A549 (cell line): ENCODE measurements at regions of chr17 and their contacts with region 1.

Region 1: DNA sequence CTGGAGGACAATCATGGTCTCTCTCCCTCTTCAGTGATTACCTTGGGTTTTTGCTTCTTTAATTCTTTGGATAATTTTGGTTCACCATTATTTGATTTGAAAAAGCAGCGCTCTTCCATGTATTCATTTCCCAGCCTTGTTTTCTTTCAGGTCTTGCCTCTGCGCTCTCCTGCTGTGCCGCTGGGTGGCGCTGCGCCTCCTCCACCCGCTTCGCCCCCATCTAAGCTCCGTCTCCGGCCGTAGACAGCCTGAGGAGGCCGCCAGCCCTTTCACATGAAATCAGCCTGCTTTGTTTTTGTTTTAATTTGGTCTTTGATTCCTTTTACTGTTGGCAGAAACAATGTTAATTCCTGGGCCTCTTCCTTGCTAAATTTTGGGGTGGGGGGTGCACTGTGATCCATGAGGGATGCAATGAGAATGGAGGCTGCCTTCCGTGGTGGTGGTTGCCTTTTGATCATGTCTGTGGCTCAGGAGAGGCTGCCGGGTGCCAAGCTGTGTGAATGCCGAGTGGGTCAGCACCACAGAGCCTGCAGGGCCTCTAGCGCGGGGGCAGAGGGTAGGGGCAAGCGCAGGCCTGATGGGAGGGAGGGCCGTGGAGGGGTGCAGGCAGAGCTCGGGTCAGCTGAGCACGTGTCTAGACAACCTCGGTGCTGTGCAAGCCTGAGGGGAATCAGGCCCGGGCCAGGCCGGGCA is 64.1 kb downstream of the PLD6 start:
- DNase-seq: peak; percentile 63 to 85
- ATAC-seq: peak in 1 of 2 experiments; percentile 67; a peak in 3 of 6 replicates
- H3K4me3 ChIP-seq: no peak overlapping the region
- H3K27ac ChIP-seq: peak overlapping the region in 1 of 2 experiments; percentile 63; a peak in 3 of 6 replicates
- H3K4me1 ChIP-seq: peaks cover 28% of the 10 kb centered on the region
- CTCF ChIP-seq: peak; percentile 83
- EP300 ChIP-seq: no peak
- POLR2A ChIP-seq: no peak
- RAD21 ChIP-seq: peak; percentile 67 to 78

Region 2: DNA sequence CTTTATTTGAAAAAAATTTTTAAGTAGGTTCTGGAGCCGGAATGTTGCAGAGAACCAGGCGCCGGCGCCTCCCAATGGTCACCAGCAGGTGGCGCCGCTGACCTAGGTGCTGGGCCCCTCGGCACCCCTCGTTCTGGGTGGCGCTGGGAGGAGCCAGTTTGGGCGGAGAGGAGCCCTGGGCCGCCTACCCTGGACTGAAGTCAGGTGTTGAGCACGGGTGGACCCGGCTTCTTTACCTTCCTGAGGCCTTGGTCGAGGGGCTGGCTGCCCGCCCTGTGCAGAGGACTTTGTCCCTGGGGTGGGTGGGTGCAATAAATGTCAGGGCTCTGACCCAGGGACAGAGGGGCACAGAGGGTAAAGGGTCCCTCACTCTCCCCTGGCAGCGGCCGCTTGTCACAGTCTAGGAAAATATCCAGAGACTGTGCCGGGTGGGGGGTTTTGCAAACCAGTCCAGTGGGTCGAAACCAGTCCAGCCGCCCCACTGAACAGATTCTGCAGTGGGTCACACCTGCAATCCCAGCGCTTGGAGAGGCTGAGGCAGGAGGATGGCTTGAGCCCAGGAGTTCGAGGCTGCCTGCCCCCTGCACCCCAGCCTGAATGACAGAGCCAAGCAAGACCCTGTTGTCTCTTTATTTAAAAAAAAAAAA is 140.0 kb before region 1 on chr17:
- CTCF ChIA-PET with region 1: interaction called, 30 read pairs
- POLR2A ChIA-PET with region 1: no interaction called
- DNase-seq: peak; percentile 81 to 88
- ATAC-seq: peak; percentile 84 to 93
- H3K4me3 ChIP-seq: no peak overlapping the region
- H3K27ac ChIP-seq: peak overlapping the region; percentile 77 to 83
- H3K4me1 ChIP-seq: peaks cover 11% of the 10 kb centered on the region
- CTCF ChIP-seq: peak; percentile 99
- EP300 ChIP-seq: no peak
- POLR2A ChIP-seq: no peak
- RAD21 ChIP-seq: peak; percentile 99 to 100

Region 3: DNA sequence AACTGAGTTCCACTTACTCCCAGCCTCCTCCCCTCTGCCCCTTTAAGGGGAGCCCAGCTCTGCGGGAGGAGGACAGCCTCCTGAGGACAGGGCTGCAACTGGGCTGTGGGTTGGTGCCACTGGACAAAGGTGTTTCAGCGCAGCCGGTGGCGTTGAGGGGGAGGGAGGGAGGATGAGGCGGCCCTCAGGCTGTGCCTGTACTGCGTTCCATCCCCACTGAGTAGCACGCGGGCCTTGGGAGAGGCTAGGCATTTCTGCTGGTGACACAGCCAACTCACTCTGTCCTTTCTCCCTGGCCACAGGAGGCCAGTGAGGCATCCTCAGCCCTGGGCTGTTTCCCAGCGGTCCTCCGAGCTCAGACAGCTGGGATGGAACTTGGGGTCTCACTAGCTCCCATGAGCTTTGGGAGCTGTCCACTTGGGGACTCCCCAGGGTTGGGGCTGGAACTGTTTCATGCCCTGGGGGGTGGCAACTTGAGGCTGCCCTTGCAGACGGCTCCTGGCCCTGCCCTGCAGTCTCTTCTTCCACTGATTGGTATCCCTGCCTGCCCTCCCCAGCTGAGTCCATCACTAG is 29.3 kb before region 1 on chr17:
- CTCF ChIA-PET with region 1: interaction called, 10 read pairs
- POLR2A ChIA-PET with region 1: no interaction called
- DNase-seq: no peak
- ATAC-seq: peak; percentile 8 to 22; a peak in 3 of 6 replicates
- H3K4me3 ChIP-seq: no peak overlapping the region
- H3K27ac ChIP-seq: peak overlapping the region in 1 of 2 experiments; percentile 27; a peak in 3 of 6 replicates
- H3K4me1 ChIP-seq: peaks cover 87% of the 10 kb centered on the region
- CTCF ChIP-seq: no peak
- EP300 ChIP-seq: no peak
- POLR2A ChIP-seq: no peak
- RAD21 ChIP-seq: no peak

Region 4: GRCh38 chr17:17125136-17126084 is 16.6 kb before region 1 on chr17:
- CTCF ChIA-PET with region 1: interaction called, 62 read pairs
- POLR2A ChIA-PET with region 1: no interaction called
- DNase-seq: no peak
- ATAC-seq: 0 out of 6 replicates have a peak, but pooled peaks of 1 of the 2 experiments have one; percentile 4
- H3K4me3 ChIP-seq: no peak overlapping the region
- H3K27ac ChIP-seq: peak overlapping the region in 1 of 2 experiments; percentile 16; a peak in 2 of 6 replicates
- H3K4me1 ChIP-seq: peaks cover 29% of the 10 kb centered on the region
- CTCF ChIP-seq: no peak
- EP300 ChIP-seq: no peak
- POLR2A ChIP-seq: no peak
- RAD21 ChIP-seq: no peak

Region 5: GRCh38 chr17:17175902-17176301 is 33.9 kb after region 1 on chr17:
- CTCF ChIA-PET with region 1: interaction called, 23 read pairs
- POLR2A ChIA-PET with region 1: no interaction called
- DNase-seq: no peak
- ATAC-seq: no peak
- H3K4me3 ChIP-seq: no peak overlapping the region
- H3K27ac ChIP-seq: no peak overlapping the region; a peak in 1 of 6 replicates
- H3K4me1 ChIP-seq: no peaks in the 10 kb centered on the region
- CTCF ChIP-seq: no peak
- EP300 ChIP-seq: no peak
- POLR2A ChIP-seq: no peak
- RAD21 ChIP-seq: no peak

Region 6: GRCh38 chr17:17196776-17197175 is 54.8 kb after region 1 on chr17:
- CTCF ChIA-PET with region 1: interaction called, 15 read pairs
- POLR2A ChIA-PET with region 1: no interaction called
- DNase-seq: no peak
- ATAC-seq: no peak
- H3K4me3 ChIP-seq: no peak overlapping the region
- H3K27ac ChIP-seq: no peak overlapping the region
- H3K4me1 ChIP-seq: peaks cover 4% of the 10 kb centered on the region; the same call in 2 of the 3 replicates
- CTCF ChIP-seq: no peak
- EP300 ChIP-seq: no peak
- POLR2A ChIP-seq: no peak
- RAD21 ChIP-seq: no peak

Region 7: GRCh38 chr17:17246879-17247278 is 104.9 kb after region 1 on chr17:
- CTCF ChIA-PET with region 1: no interaction called
- POLR2A ChIA-PET with region 1: no interaction called
- DNase-seq: no peak
- ATAC-seq: no peak
- H3K4me3 ChIP-seq: no peak overlapping the region
- H3K27ac ChIP-seq: no peak overlapping the region
- H3K4me1 ChIP-seq: no peaks in the 10 kb centered on the region
- CTCF ChIP-seq: no peak
- EP300 ChIP-seq: no peak
- POLR2A ChIP-seq: no peak
- RAD21 ChIP-seq: no peak

Region 8: GRCh38 chr17:17377071-17377967 is 235.3 kb after region 1 on chr17:
- CTCF ChIA-PET with region 1: no interaction called
- POLR2A ChIA-PET with region 1: no interaction called
- DNase-seq: no peak
- ATAC-seq: no peak
- H3K4me3 ChIP-seq: no peak overlapping the region
- H3K27ac ChIP-seq: no peak overlapping the region
- H3K4me1 ChIP-seq: peaks cover 9% of the 10 kb centered on the region; the same call in 2 of the 3 replicates
- CTCF ChIP-seq: no peak
- EP300 ChIP-seq: no peak
- POLR2A ChIP-seq: no peak
- RAD21 ChIP-seq: no peak